OCI-LY7 (cell line): ENCODE measurements at regions of chr16 and their contacts with region 1.

Region 1: GRCh38 chr16:4271176-4272066 is 1.4 kb downstream of the TFAP4 start:
- DNase-seq: peak; percentile 94
- H3K4me3 ChIP-seq: peak overlapping the region; percentile 83
- H3K27ac ChIP-seq: peak overlapping the region; percentile 89
- H3K4me1 ChIP-seq: peaks cover 24% of the 10 kb centered on the region
- CTCF ChIP-seq: no peak

Region 2: GRCh38 chr16:4183237-4184036 is 88.0 kb before region 1 on chr16:
- CTCF ChIA-PET with region 1: no interaction called
- POLR2A ChIA-PET with region 1: no interaction called
- intact Hi-C with region 1: no loop called
- DNase-seq: peak; percentile 90
- H3K4me3 ChIP-seq: peak overlapping the region; percentile 67
- H3K27ac ChIP-seq: no peak overlapping the region
- H3K4me1 ChIP-seq: peaks cover 10% of the 10 kb centered on the region
- CTCF ChIP-seq: no peak

Region 3: GRCh38 chr16:4200000-4200780 is 71.2 kb before region 1 on chr16:
- CTCF ChIA-PET with region 1: interaction called, 12 read pairs
- POLR2A ChIA-PET with region 1: no interaction called
- intact Hi-C with region 1: no loop called
- DNase-seq: peak; percentile 56
- H3K4me3 ChIP-seq: no peak overlapping the region
- H3K27ac ChIP-seq: no peak overlapping the region
- H3K4me1 ChIP-seq: no peaks in the 10 kb centered on the region
- CTCF ChIP-seq: peak; percentile 79

Region 4: GRCh38 chr16:4253394-4254150 is 17.8 kb before region 1 on chr16:
- CTCF ChIA-PET with region 1: interaction called, 4 read pairs
- POLR2A ChIA-PET with region 1: interaction called, 5 read pairs
- intact Hi-C with region 1: loop called (anchors 1 kb)
- DNase-seq: peak; percentile 100
- H3K4me3 ChIP-seq: peak overlapping the region; percentile 71
- H3K27ac ChIP-seq: peak overlapping the region; percentile 19
- H3K4me1 ChIP-seq: peaks cover 15% of the 10 kb centered on the region
- CTCF ChIP-seq: no peak